Stomach (tissue), 19 donors: ENCODE measurements at regions of chr19 and their contacts with region 1.

Region 1: DNA sequence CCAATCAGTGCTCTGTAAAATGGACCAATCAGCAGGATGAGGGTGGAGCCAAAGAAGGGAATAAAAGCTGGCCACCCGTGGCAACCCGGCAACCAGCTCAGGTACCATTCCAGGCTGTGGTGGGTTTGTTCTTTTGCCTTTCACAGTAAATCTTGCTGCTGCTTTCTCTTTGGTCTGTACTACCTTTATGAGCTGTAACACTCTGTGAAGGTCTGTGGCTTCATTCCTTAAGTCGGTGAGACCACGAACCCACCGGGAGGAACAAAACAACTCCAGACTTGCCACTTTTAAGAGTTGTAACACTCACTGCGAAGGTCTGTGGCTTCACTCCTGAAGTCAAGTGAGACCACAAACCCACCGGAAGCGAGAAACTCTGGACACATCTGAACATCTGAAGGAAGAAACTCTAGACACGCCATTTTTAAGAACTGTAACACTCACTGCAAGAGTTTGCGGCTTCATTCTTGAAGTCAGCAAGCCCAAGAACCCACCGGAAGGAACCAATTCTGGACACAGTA is 16.5 kb upstream of the SPACA6 start:
- DNase-seq: no peak
- H3K4me3 ChIP-seq: no peak overlapping the region
- H3K27ac ChIP-seq: no peak overlapping the region
- H3K4me1 ChIP-seq: no peaks in the 10 kb centered on the region
- H3K27me3 ChIP-seq: peaks cover 0 to 21% (median 6%) of the 10 kb centered on the region in 3 donors
- CTCF ChIP-seq: no peak
- EP300 ChIP-seq: no peak
- POLR2A ChIP-seq: no peak

Region 2: DNA sequence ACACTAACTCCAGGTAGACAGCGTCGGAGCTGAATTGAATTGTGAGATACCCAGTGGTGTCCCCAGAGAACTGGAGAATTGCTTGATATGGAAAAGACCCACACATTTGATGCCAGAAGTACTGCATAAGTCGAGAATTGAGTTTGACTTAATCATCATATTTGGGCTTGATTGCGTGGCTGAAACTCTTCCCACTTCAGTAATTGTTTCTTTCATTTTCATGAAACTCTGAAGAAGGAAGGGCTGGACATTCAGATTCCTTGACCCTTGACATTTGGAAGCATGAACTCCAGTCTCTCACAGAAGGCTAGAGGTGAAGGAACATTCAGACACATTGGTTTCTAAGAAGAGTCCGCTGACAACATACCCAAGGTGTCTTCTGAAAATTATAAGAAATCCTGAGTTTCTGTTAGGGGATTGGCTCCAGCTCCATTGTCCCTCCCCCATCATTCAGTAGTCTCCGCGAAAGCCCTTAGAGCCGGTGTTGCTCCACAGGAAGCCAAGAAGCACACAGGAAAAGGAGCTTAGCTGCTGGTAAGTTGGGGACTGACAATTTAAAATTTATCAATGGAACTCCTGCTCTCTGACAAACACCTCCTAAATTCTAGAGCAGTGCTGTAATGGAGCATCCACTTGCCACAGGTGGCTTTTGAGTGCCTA is 84.2 kb after region 1 on chr19 and contains the start of gene FPR2:
- intact Hi-C with region 1: loop called (anchors 10 kb)
- DNase-seq: no peak
- H3K4me3 ChIP-seq: peak within 1 kb of the TSS in 1 of 4 donors; percentile 1
- H3K27ac ChIP-seq: peak within 1 kb of the TSS in 2 of 5 donors; percentile 12 to 54
- H3K4me1 ChIP-seq: no peaks in the 10 kb centered on the region
- H3K27me3 ChIP-seq: peaks cover 0 to 27% (median 4%) of the 10 kb centered on the region in 3 donors
- CTCF ChIP-seq: no peak
- EP300 ChIP-seq: no peak
- POLR2A ChIP-seq: no peak
- total RNA-seq, gene FPR2: 0.58 to 1.7 (median 1.3) TPM in 3 of 5 donors, not detected in the others